ENCODE measurements at regions of chr11 and their contacts with region 1.

Region 1: GRCh38 chr11:9460322-9461067 is at the start of gene ZNF143:
- DNase-seq: peak; percentile 100
- ATAC-seq: peak; percentile 93
- H3K4me3 Mint-ChIP-seq: peak within 1 kb of the TSS; percentile 93
- H3K27ac Mint-ChIP-seq: peak within 1 kb of the TSS; percentile 99
- H3K4me1 Mint-ChIP-seq: peaks cover 24% of the 10 kb centered on the region
- H3K27me3 Mint-ChIP-seq: no peaks in the 10 kb centered on the region
- total RNA-seq, gene ZNF143: 32.6 to 34.9 TPM

Region 2: GRCh38 chr11:8964324-8965320 is 495.9 kb before region 1 on chr11 and contains the start of gene TMEM9B:
- CTCF ChIA-PET with region 1: no interaction called
- POLR2A ChIA-PET with region 1: no interaction called
- intact Hi-C with region 1: loop called in 1 of 2 experiments (anchors 5 kb)
- DNase-seq: peak; percentile 90
- ATAC-seq: peak; percentile 87
- H3K4me3 Mint-ChIP-seq: peak within 1 kb of the TSS; percentile 81
- H3K27ac Mint-ChIP-seq: peak within 1 kb of the TSS; percentile 89
- H3K4me1 Mint-ChIP-seq: peaks cover 29% of the 10 kb centered on the region
- H3K27me3 Mint-ChIP-seq: no peaks in the 10 kb centered on the region
- total RNA-seq, gene TMEM9B: 9.9 to 13.1 TPM

Region 3: DNA sequence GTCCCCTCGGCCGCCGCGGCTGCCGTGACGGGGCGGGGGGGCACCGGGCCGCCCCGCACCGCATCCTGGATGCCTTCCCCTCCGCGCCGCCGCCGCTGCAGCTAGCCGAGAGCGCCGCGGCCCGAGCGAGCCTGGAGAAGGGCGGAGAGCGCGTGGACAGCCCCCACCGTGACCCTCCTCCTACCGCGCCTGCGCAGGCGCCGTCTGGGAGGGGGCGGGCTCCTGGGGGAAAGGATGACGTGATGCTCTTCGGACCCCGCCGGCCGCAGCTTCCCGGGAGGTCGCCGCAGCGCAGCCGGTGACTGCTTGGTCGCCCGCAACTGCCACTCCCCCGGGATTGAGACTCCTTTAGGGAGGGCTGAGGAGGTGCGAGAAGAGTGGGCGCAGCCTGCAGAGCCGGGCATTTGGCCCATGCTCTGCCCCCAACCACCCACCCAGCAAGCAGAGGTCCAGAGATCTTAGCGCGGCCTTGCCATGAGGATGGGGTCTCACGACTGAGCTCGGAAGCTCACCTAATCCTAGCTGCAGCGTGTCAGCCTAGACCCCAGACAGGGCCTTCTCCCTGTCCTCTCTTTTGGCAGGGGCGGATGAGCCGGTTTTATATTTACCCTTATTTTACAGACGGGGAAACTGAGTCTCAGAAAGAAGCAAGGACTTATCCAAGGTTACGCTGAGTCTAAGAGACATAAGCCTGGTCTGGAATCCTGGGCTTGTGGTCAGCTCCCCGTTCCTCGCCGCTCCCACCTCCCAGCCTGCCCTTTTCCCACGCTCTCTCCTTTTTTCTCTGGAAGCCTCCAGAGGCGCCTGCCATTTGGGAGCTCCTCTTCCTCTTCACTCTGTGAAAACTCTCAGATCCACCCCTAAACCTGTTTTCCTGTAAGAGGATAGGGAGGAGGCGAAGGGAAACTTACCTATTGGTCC is 195.0 kb before region 1 on chr11 and contains the start of gene DENND5A:
- CTCF ChIA-PET with region 1: no interaction called
- POLR2A ChIA-PET with region 1: interaction called, 8 read pairs
- intact Hi-C with region 1: loop called (anchors 1 to 2 kb)
- DNase-seq: peak; percentile 71
- ATAC-seq: peak; percentile 37
- H3K4me3 Mint-ChIP-seq: peak within 1 kb of the TSS; percentile 87
- H3K27ac Mint-ChIP-seq: peak within 1 kb of the TSS; percentile 93
- H3K4me1 Mint-ChIP-seq: peaks cover 33% of the 10 kb centered on the region
- H3K27me3 Mint-ChIP-seq: peaks cover 6% of the 10 kb centered on the region
- total RNA-seq, gene DENND5A: 43.6 to 62.6 TPM

Region 4: DNA sequence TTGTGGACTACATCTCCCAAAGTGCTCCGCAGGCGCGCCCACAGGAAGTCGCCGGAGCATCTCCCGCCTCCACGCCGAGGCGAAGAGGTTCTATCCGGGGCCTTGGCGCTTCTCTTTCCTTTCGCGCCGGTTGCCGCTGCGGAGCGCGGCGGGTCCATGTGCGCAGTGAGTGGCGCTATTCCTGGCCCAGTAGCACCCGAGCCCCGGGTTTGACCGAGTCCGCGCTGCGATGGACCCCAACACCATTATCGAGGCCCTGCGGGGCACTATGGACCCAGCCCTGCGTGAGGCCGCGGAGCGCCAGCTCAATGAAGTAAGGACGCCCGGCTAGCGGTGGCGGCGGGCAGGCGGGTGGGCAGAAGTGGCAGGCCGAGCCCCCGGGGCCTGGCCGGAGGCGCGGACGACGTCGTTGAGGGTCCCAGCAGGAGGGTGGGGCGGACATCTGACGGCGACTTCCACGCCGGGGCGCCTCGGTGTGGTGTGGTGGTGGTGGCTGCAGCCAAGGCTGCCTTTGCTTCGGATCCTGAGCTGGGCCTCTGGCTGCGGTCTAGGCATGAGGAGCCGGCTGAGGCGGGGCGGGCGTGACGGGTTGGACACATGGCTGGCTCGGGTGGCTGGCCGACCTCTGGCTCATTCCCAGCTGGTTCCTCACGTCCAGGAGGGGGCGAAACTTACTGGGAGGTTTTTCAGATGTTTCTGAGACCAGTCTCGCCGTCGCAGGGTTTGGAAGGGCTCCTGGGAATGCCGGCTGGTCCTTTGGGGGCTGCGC is 75.8 kb before region 1 on chr11 and contains the start of gene IPO7:
- CTCF ChIA-PET with region 1: interaction called, 5 read pairs
- POLR2A ChIA-PET with region 1: interaction called, 15 read pairs
- intact Hi-C with region 1: loop called (anchors 1 kb)
- DNase-seq: peak; percentile 96
- ATAC-seq: peak; percentile 98
- H3K4me3 Mint-ChIP-seq: peak within 1 kb of the TSS; percentile 96
- H3K27ac Mint-ChIP-seq: peak within 1 kb of the TSS; percentile 96
- H3K4me1 Mint-ChIP-seq: peaks cover 26% of the 10 kb centered on the region
- H3K27me3 Mint-ChIP-seq: no peaks in the 10 kb centered on the region
- total RNA-seq, gene IPO7: 155 to 181 TPM

Region 5: DNA sequence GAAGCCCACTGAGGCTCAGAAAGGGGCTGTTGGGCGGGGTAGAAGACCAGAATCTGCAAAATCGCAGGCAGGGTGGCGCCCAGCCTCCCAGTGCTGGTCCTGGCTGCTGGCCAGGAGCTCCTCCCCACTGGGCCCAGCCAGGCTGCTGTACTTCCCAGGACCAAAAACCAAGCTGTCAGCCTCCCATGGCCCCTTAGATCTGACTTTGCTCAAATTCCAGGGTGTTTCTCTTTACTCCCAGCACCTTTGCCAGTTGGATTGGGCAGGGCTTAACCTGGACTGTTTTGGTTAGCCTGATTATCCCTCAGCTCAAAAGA is 68.8 kb after region 1 on chr11:
- CTCF ChIA-PET with region 1: no interaction called
- POLR2A ChIA-PET with region 1: no interaction called
- intact Hi-C with region 1: no loop called
- DNase-seq: no peak
- ATAC-seq: no peak
- H3K4me3 Mint-ChIP-seq: no peak overlapping the region
- H3K27ac Mint-ChIP-seq: no peak overlapping the region
- H3K4me1 Mint-ChIP-seq: no peaks in the 10 kb centered on the region
- H3K27me3 Mint-ChIP-seq: no peaks in the 10 kb centered on the region

Region 6: GRCh38 chr11:9601037-9601875 is 140.8 kb after region 1 on chr11:
- CTCF ChIA-PET with region 1: no interaction called
- POLR2A ChIA-PET with region 1: interaction called, 4 read pairs
- intact Hi-C with region 1: loop called in 1 of 2 experiments (anchors 1 kb)
- DNase-seq: peak; percentile 86
- ATAC-seq: peak; percentile 89
- H3K4me3 Mint-ChIP-seq: peak overlapping the region; percentile 65
- H3K27ac Mint-ChIP-seq: peak overlapping the region; percentile 91
- H3K4me1 Mint-ChIP-seq: peaks cover 25% of the 10 kb centered on the region
- H3K27me3 Mint-ChIP-seq: no peaks in the 10 kb centered on the region

Region 7: GRCh38 chr11:10750838-10751580 is 1290.5 kb after region 1 on chr11 and contains the start of gene CTR9:
- CTCF ChIA-PET with region 1: no interaction called
- POLR2A ChIA-PET with region 1: no interaction called
- intact Hi-C with region 1: loop called in 1 of 2 experiments (anchors 10 kb)
- DNase-seq: peak; percentile 97
- ATAC-seq: peak; percentile 92
- H3K4me3 Mint-ChIP-seq: peak within 1 kb of the TSS; percentile 96
- H3K27ac Mint-ChIP-seq: peak within 1 kb of the TSS; percentile 92
- H3K4me1 Mint-ChIP-seq: peaks cover 16% of the 10 kb centered on the region
- H3K27me3 Mint-ChIP-seq: no peaks in the 10 kb centered on the region
- total RNA-seq, gene CTR9: 39.7 to 43.9 TPM